Dorsolateral prefrontal cortex (tissue), 120 donors: ENCODE measurements at regions of chr15 and their contacts with region 1.

Region 1: DNA sequence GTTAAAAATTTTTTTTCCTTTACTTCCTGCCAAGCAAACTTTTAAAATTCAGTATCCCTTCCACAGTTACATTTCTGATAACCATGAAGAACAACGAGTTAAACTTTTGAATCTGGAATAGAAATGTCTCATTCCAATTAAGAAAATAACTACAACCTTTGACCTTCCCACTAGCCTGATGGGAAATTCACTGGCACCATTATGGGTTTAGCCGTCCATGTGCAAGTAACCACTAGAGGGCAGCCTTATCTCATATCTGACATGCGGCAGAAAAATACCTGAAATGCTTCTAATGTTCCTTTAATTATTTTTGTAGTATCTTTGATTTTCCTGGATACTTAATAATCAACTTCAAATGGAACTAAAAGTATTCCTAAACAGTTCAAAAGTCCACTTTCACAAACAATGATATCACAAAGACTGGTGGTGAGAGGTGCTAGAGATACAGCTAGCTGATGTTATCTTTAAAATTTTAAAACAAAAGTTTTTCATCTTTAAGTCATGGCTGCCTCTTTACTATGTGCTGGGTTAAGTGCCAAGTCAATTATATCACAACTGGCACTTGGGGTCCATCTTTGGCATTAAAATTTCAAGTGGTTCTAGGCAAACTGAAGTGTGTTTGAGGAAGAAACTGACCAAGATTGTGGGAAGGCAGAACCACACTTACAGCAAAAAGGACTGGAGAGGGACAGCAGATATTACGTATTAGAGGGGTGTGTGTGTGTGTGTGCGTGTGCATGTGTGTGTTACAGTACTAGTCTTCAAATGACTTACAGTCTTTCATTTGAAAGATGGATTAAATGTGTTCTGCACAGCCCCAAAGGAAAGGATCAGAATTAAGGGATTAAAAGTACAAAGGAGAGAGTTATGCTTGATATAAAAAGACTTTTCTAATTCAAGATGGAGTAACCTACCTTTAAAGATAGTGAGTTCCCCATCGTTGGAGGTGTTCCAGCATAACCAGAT is 107.1 kb upstream of the ICE2 start:
- DNase-seq: peak in 4 of 10 donors; percentile 37 to 73 (median 62)
- H3K4me3 ChIP-seq: no peak overlapping the region
- H3K27ac ChIP-seq: peak overlapping the region in 1 of 59 donors; percentile 25
- H3K27me3 ChIP-seq: no peaks in the 10 kb centered on the region
- CTCF ChIP-seq: peak; percentile 85 to 98 (median 94)

Region 2: DNA sequence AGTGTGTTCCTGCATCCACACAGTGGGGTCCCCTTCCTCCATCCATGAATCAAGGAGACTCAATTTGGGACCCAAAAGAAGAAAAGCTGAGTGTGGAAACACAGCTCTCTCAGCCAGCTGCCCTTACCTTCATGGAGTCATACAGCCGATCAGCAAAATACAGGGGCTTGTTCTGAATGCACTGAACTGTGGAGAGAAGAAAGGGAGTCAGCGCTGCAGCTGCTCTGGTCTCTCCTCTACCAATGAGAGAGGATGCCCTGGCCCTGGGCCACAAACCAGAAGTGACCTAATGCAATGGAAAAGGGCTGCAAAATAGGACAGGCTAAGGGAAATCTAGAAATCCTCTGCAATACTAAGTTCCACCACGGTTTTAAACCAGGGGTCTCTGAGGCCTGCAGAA is 235.0 kb before region 1 on chr15:
- intact Hi-C with region 1: no loop called
- DNase-seq: peak in 7 of 10 donors; percentile 36 to 56 (median 46)
- H3K4me3 ChIP-seq: peak overlapping the region in 1 of 59 donors; percentile 2
- H3K27ac ChIP-seq: peak overlapping the region in 11 of 59 donors; percentile 10 to 71 (median 39)
- H3K27me3 ChIP-seq: peaks cover 0 to 8% (median 0%) of the 10 kb centered on the region in 45 donors
- CTCF ChIP-seq: no peak

Region 3: GRCh38 chr15:60916679-60917460 is 330.8 kb after region 1 on chr15:
- intact Hi-C with region 1: loop called (anchors 2 to 5 kb)
- DNase-seq: peak; percentile 68 to 92 (median 82)
- H3K4me3 ChIP-seq: peak overlapping the region in 27 of 59 donors; percentile 0 to 41 (median 19)
- H3K27ac ChIP-seq: peak overlapping the region in 53 of 59 donors; percentile 3 to 86 (median 68)
- H3K27me3 ChIP-seq: no peaks in the 10 kb centered on the region
- CTCF ChIP-seq: peak; percentile 66 to 96 (median 89)

Region 4: GRCh38 chr15:61051569-61052031 is 465.6 kb after region 1 on chr15:
- intact Hi-C with region 1: loop called (anchors 5 kb)
- DNase-seq: peak in 7 of 10 donors; percentile 42 to 73 (median 56)
- H3K4me3 ChIP-seq: peak overlapping the region in 11 of 59 donors; percentile 2 to 31 (median 19)
- H3K27ac ChIP-seq: peak overlapping the region in 19 of 59 donors; percentile 7 to 67 (median 40)
- H3K27me3 ChIP-seq: no peaks in the 10 kb centered on the region
- CTCF ChIP-seq: peak in 55 of 56 donors; percentile 24 to 75 (median 60)